ENCODE measurements at regions of chr1 and their contacts with region 1.

Region 1: GRCh38 chr1:241677201-241677600 is 25.1 kb downstream of the WDR64 start:
- DNase-seq: peak; percentile 28
- ATAC-seq: peak; percentile 97
- H3K4me3 Mint-ChIP-seq: peak overlapping the region; percentile 28
- H3K27ac Mint-ChIP-seq: peak overlapping the region; percentile 35
- H3K4me1 Mint-ChIP-seq: peaks cover 27% of the 10 kb centered on the region
- H3K27me3 Mint-ChIP-seq: peaks cover 6% of the 10 kb centered on the region

Region 2: DNA sequence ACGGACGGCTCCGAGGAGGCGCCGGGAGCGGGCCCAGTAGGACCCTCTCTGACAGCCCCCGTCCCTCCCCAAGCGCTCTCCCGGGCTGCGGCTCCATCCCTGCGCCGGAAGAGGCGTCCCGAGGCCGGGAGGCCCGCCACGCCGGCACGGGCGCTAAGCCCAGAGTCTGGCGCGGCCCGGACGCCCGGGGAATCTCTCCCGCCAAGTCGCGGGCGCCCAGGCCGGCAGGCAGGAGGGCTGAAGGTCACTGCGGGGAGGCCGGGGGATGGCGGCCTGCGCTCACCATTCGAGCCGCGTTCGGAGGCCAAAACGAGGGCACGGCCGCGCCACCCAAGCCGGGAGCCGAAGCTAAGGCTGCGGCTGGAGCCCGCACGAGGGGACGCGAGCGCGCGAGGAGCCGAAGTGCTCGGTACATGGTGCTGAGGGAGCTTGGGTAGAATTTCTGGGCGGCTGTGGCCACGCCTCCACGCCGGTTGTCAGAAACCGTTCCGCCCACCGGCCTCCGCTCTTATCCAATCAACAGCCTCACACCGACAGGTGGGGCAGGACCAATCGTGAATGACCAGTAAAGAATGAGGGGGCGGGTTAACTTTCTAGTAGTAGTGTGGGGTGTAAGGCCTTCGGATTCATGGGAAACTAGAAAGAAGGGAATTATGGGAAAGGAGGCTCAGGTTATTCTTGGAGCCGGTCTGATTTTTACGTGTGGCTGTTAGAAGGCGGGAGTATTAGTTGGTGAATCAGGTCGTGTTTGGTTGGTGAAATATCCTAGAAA is 157.7 kb before region 1 on chr1 and contains the start of gene FH:
- CTCF ChIA-PET with region 1: no interaction called
- POLR2A ChIA-PET with region 1: no interaction called
- intact Hi-C with region 1: loop called in 1 of 2 experiments (anchors 1 kb)
- DNase-seq: peak; percentile 96
- ATAC-seq: peak; percentile 98
- H3K4me3 Mint-ChIP-seq: peak within 1 kb of the TSS; percentile 86
- H3K27ac Mint-ChIP-seq: peak within 1 kb of the TSS; percentile 87
- H3K4me1 Mint-ChIP-seq: peaks cover 21% of the 10 kb centered on the region
- H3K27me3 Mint-ChIP-seq: peaks cover 23% of the 10 kb centered on the region
- total RNA-seq, gene FH: 80.2 to 94.3 TPM

Region 3: GRCh38 chr1:241592273-241592958 is 84.8 kb before region 1 on chr1:
- CTCF ChIA-PET with region 1: no interaction called
- POLR2A ChIA-PET with region 1: no interaction called
- intact Hi-C with region 1: loop called in 1 of 2 experiments (anchors 1 kb)
- DNase-seq: no peak
- ATAC-seq: peak; percentile 99
- H3K4me3 Mint-ChIP-seq: no peak overlapping the region
- H3K27ac Mint-ChIP-seq: peak overlapping the region; percentile 85
- H3K4me1 Mint-ChIP-seq: peaks cover 34% of the 10 kb centered on the region
- H3K27me3 Mint-ChIP-seq: no peaks in the 10 kb centered on the region

Region 4: DNA sequence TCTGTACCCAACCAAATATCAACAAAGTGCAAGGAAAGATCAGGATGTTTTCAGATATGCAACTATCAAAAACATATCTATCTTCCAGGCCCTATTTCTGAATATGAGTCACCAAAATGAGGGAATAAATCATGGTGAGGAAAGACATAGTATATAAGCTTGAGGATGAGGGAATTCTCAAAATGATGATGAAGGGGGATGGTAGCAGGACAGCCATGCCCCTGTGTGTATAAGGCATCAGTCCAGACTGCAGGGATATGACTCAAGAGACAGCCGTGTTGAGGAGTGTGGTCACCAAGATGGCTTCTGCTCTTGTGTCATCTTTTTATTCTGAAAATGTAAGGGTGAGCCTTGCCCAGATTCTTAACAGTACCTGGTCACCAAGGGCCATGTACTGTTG is 29.5 kb before region 1 on chr1:
- CTCF ChIA-PET with region 1: no interaction called
- POLR2A ChIA-PET with region 1: no interaction called
- intact Hi-C with region 1: no loop called
- DNase-seq: no peak
- ATAC-seq: no peak
- H3K4me3 Mint-ChIP-seq: no peak overlapping the region
- H3K27ac Mint-ChIP-seq: no peak overlapping the region
- H3K4me1 Mint-ChIP-seq: peaks cover 5% of the 10 kb centered on the region
- H3K27me3 Mint-ChIP-seq: no peaks in the 10 kb centered on the region

Region 5: DNA sequence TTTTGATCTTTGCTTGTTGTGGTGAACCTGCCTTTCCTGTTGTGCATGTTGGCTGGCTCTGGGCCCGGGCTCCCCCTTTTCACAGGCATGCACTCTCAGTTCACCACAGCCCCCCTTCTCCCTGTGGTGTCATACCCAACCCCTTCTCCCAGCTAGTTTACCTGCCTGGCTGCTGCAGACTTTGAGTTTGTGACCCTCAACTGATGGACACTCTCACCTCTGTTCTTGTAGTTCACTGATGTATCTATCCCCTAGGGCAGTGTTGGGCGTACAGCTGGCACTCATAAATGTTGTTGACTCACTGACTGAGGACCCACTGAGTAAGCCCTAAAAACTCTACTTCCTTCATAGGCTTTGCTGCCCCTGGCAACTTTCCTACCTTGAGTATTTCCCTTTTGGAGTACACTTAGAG is 29.8 kb after region 1 on chr1:
- CTCF ChIA-PET with region 1: interaction called, 4 read pairs
- POLR2A ChIA-PET with region 1: no interaction called
- intact Hi-C with region 1: loop called in 1 of 2 experiments (anchors 1 kb)
- DNase-seq: peak; percentile 8
- ATAC-seq: no peak
- H3K4me3 Mint-ChIP-seq: no peak overlapping the region
- H3K27ac Mint-ChIP-seq: no peak overlapping the region
- H3K4me1 Mint-ChIP-seq: peaks cover 14% of the 10 kb centered on the region
- H3K27me3 Mint-ChIP-seq: peaks cover 4% of the 10 kb centered on the region

Region 6: GRCh38 chr1:241716915-241717656 is 39.9 kb after region 1 on chr1:
- CTCF ChIA-PET with region 1: no interaction called
- POLR2A ChIA-PET with region 1: no interaction called
- intact Hi-C with region 1: loop called (anchors 1 to 2 kb)
- DNase-seq: peak; percentile 46
- ATAC-seq: peak; percentile 94
- H3K4me3 Mint-ChIP-seq: no peak overlapping the region
- H3K27ac Mint-ChIP-seq: no peak overlapping the region
- H3K4me1 Mint-ChIP-seq: peaks cover 19% of the 10 kb centered on the region
- H3K27me3 Mint-ChIP-seq: peaks cover 11% of the 10 kb centered on the region

Region 7: DNA sequence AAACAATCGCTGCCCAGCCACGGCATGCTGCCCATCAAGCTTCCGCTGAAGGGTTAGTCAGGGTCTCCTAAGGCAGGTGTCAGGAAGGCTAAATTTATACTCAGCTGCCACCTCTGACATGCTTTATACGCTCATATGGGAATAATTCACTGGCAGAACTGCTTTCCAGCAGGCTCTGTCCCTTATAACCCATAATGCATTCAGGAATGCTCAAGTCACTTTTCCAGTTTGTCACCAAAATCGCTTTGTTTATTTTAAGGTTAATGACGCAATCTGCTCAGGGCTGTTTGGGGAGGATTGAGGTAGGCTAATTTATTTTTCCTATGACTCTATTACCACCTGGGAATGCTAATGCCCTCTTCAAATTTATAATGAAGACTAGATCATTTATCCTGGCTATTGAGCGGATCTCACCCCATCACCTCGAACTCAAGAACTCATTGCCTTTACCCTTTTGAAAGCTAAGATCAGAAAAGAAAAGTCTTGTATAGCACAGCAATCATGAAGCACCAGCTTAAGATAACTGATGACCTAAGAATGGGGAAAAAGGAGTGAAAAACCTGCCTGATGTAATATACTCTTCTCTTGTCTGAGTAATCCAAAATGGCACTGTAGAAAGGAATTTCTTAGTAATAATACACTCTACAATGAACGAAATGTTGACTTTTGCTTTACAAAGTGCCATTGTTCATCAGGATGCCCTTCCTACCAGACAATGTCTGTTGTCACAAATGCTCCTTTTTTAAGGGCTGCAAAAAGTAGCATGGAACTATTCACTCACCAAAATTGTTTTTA is 72.9 kb after region 1 on chr1:
- CTCF ChIA-PET with region 1: no interaction called
- POLR2A ChIA-PET with region 1: no interaction called
- intact Hi-C with region 1: no loop called
- DNase-seq: no peak
- ATAC-seq: no peak
- H3K4me3 Mint-ChIP-seq: no peak overlapping the region
- H3K27ac Mint-ChIP-seq: no peak overlapping the region
- H3K4me1 Mint-ChIP-seq: no peaks in the 10 kb centered on the region
- H3K27me3 Mint-ChIP-seq: no peaks in the 10 kb centered on the region

Region 8: DNA sequence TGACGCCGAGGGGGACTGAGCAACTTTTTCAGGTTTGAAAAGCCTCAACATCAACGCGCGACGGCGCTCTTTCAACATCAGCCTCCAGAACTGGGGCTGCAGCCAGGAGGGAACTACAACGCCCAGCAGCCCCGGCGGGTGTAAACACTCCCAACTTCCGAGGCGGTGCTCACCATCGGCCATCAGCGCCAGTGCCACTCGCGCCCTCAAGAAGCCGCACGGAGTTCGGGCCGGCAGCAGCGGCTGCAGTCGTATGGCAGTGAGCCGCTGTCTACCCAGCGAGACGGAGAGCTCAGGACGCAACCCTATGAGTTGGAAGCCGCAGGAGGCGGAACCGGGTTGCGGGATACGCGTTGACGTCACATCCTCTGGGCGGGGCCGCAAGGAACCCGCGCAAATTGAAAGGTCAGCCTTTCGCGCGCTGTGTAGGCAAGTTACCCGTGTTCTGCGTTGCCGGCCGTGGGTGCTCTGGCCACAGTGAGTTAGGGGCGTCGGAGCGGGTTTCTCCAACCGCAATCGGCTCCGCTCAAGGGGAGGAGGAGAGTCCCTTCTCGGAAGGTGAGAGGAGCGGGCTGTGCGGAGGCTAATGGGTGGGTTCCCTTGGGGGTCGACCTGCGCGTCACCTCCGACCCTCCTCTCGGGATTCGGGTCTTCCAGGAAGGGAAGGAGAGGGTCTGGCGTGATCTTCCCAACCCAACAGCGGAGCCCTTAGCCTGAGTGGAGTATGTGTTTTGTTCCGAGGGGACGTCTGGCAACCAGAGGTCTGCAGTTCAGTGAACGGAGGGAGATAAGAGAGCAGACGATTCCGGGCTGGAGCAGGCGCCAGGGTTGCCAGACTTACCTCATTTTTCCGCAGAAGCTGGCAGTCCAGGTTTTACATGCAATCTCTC is 170.8 kb after region 1 on chr1 and contains the start of gene EXO1:
- CTCF ChIA-PET with region 1: interaction called, 3 read pairs
- POLR2A ChIA-PET with region 1: no interaction called
- intact Hi-C with region 1: loop called in 1 of 2 experiments (anchors 1 kb)
- DNase-seq: peak; percentile 95
- ATAC-seq: peak; percentile 97
- H3K4me3 Mint-ChIP-seq: peak within 1 kb of the TSS; percentile 99
- H3K27ac Mint-ChIP-seq: peak within 1 kb of the TSS; percentile 99
- H3K4me1 Mint-ChIP-seq: peaks cover 14% of the 10 kb centered on the region
- H3K27me3 Mint-ChIP-seq: no peaks in the 10 kb centered on the region
- total RNA-seq, gene EXO1: 53.8 to 57.8 TPM